SK-N-SH (cell line): ENCODE measurements at regions of chr17 and their contacts with region 1.

Region 1: GRCh38 chr17:40559954-40560591 is 5.2 kb downstream of the CCR7 start:
- DNase-seq: peak; percentile 91
- H3K4me3 ChIP-seq: peak overlapping the region in 1 of 2 experiments; percentile 18; a peak in 2 of 4 replicates
- H3K27ac ChIP-seq: peak overlapping the region in 1 of 2 experiments; percentile 79; a peak in 2 of 4 replicates
- H3K4me1 ChIP-seq: peaks cover 0 to 51% of the 10 kb centered on the region in 2 experiments; a peak in 2 of 4 replicates
- H3K27me3 ChIP-seq: peaks cover 11% of the 10 kb centered on the region; the same call in 1 of the 2 replicates
- CTCF ChIP-seq: peak; percentile 96
- EP300 ChIP-seq: 0 out of 4 replicates have a peak, but pooled peaks of 1 of the 2 experiments have one; percentile 34
- RAD21 ChIP-seq: peak; percentile 100

Region 2: DNA sequence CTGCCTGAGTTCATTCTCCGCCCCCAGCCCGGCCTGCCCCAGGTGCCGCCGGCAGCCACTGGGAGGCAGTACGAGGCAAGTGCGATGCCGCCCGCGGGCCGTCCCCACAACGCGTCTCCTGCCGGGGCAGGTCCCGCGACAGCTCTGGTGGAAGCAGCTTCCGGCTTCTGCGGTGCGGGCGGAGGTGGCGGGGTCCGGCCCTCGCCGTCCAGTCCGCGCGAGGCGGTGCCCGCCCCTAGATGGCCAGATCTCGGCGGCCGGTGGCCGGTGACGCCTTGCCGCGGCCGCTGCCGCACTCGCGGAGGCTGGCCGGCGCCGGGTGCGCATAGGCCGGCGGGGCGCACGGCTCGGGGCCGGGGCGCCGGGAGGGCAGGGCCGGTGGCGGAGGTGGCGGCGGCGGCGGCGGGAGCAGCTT is 197.4 kb before region 1 on chr17:
- CTCF ChIA-PET with region 1: interaction called, 191 read pairs
- POLR2A ChIA-PET with region 1: interaction called, 3 read pairs
- DNase-seq: peak; percentile 93
- H3K4me3 ChIP-seq: peak overlapping the region; percentile 57 to 62
- H3K27ac ChIP-seq: no peak overlapping the region
- H3K4me1 ChIP-seq: peaks cover 6 to 16% of the 10 kb centered on the region in 2 experiments; a peak in 2 of 4 replicates
- H3K27me3 ChIP-seq: no peaks in the 10 kb centered on the region
- CTCF ChIP-seq: peak; percentile 72
- EP300 ChIP-seq: no peak
- RAD21 ChIP-seq: peak; percentile 68

Region 3: GRCh38 chr17:40417609-40418427 is 142.3 kb before region 1 on chr17 and contains the start of gene TOP2A:
- CTCF ChIA-PET with region 1: interaction called, 13 read pairs
- POLR2A ChIA-PET with region 1: no interaction called
- DNase-seq: peak; percentile 97
- H3K4me3 ChIP-seq: peak within 1 kb of the TSS; percentile 64 to 80
- H3K27ac ChIP-seq: peak within 1 kb of the TSS; percentile 50 to 81
- H3K4me1 ChIP-seq: peaks cover 0 to 10% of the 10 kb centered on the region in 2 experiments; a peak in 2 of 4 replicates
- H3K27me3 ChIP-seq: no peaks in the 10 kb centered on the region
- CTCF ChIP-seq: no peak
- EP300 ChIP-seq: no peak
- RAD21 ChIP-seq: no peak
- polyA plus RNA-seq, gene TOP2A: 20.6 and 23.2 TPM in 2 replicates

Region 4: GRCh38 chr17:40443583-40444327 is 116.3 kb before region 1 on chr17:
- CTCF ChIA-PET with region 1: interaction called, 202 read pairs
- POLR2A ChIA-PET with region 1: interaction called, 4 read pairs
- DNase-seq: peak; percentile 92
- H3K4me3 ChIP-seq: peak overlapping the region; percentile 62 to 81
- H3K27ac ChIP-seq: peak overlapping the region; percentile 74 to 77
- H3K4me1 ChIP-seq: peaks cover 3 to 46% of the 10 kb centered on the region in 2 experiments; a peak in 2 of 4 replicates
- H3K27me3 ChIP-seq: no peaks in the 10 kb centered on the region
- CTCF ChIP-seq: peak; percentile 50
- EP300 ChIP-seq: no peak
- RAD21 ChIP-seq: peak; percentile 56

Region 5: DNA sequence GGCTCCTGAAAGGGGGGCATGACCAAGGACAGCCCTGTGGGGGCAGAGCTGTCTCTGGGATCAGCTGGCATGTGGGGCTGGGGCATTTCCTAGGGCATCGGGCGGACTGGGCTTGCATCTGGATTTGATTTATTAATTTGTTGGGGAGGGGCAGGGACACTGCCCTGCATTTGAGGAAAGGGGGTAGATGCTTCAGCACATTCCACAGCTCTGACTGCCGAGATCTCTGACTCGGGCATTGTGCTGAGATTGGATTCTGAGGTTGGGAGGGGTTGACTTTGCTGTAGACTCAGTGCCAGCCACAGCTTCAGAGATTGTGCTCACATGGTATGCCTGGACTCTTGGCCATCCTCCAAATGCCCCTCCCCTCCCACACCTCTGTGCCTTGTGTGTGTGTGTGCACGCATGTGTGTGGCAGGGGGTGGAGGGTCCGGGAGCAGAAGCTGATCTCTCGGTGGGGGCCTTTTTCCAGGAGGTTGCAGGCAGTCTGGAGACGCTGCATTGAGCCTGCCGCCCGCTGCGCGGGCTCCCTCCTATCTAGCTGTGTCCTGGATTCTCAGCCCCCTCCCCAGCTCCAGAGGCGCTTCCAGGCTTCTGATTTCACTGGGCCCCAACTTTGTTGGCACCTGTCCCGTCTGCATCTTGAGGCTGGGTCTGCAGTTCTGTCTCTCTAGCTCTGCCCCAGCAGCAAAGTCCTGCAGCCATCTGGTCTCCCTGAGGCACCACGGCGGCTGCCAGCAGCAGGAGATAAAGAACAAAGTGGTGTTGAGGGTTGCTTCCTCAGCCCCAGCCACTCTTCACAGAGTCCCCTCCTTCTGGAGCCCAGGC is 101.9 kb before region 1 on chr17:
- CTCF ChIA-PET with region 1: interaction called, 34 read pairs
- POLR2A ChIA-PET with region 1: no interaction called
- DNase-seq: peak; percentile 73
- H3K4me3 ChIP-seq: peak overlapping the region in 1 of 2 experiments; percentile 17; a peak in 1 of 4 replicates
- H3K27ac ChIP-seq: peak overlapping the region; percentile 68 to 92
- H3K4me1 ChIP-seq: peaks cover 33 to 84% of the 10 kb centered on the region in 2 experiments
- H3K27me3 ChIP-seq: no peaks in the 10 kb centered on the region
- CTCF ChIP-seq: no peak
- EP300 ChIP-seq: peak; percentile 80 to 95; a peak in 3 of 4 replicates
- RAD21 ChIP-seq: no peak

Region 6: GRCh38 chr17:40499551-40500174 is 60.4 kb before region 1 on chr17:
- CTCF ChIA-PET with region 1: interaction called, 10 read pairs
- POLR2A ChIA-PET with region 1: no interaction called
- DNase-seq: peak; percentile 84
- H3K4me3 ChIP-seq: peak overlapping the region in 1 of 2 experiments; percentile 13; a peak in 1 of 4 replicates
- H3K27ac ChIP-seq: 0 out of 4 replicates have a peak overlapping the region, but pooled peaks of 1 of the 2 experiments have one; percentile 18
- H3K4me1 ChIP-seq: peaks cover 5 to 11% of the 10 kb centered on the region in 2 experiments; a peak in 1 of 4 replicates
- H3K27me3 ChIP-seq: no peaks in the 10 kb centered on the region
- CTCF ChIP-seq: no peak
- EP300 ChIP-seq: no peak
- RAD21 ChIP-seq: no peak

Region 7: DNA sequence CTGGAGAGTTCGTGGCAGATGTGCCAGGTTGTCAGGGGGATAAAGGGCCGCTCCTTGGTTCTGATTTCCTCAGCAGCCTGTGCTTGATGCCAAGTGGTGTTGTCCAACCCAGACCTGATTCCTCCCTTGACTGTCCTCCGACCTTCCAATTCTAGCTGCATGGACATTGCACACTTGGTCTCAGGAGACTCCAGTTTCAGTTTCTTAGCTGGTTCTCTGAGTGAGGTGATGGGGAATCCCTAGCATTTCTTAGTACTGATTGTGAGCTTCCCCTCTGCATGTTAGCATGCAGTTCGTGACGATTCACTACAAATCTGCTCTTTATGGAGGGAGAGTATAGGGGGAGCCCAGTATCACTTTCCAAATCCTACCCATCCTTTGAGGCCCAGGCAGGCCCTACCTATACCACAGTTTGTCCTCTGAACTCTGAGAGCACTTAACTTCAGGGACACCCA is 17.6 kb after region 1 on chr17:
- CTCF ChIA-PET with region 1: interaction called, 15 read pairs
- POLR2A ChIA-PET with region 1: no interaction called
- DNase-seq: no peak
- H3K4me3 ChIP-seq: no peak overlapping the region
- H3K27ac ChIP-seq: no peak overlapping the region
- H3K4me1 ChIP-seq: no peaks in the 10 kb centered on the region; a peak in 1 of 4 replicates
- H3K27me3 ChIP-seq: no peaks in the 10 kb centered on the region; the same call in 1 of the 2 replicates
- CTCF ChIP-seq: no peak
- EP300 ChIP-seq: no peak
- RAD21 ChIP-seq: no peak